ENCODE measurements at regions of chr9 and their contacts with region 1.

Region 1: DNA sequence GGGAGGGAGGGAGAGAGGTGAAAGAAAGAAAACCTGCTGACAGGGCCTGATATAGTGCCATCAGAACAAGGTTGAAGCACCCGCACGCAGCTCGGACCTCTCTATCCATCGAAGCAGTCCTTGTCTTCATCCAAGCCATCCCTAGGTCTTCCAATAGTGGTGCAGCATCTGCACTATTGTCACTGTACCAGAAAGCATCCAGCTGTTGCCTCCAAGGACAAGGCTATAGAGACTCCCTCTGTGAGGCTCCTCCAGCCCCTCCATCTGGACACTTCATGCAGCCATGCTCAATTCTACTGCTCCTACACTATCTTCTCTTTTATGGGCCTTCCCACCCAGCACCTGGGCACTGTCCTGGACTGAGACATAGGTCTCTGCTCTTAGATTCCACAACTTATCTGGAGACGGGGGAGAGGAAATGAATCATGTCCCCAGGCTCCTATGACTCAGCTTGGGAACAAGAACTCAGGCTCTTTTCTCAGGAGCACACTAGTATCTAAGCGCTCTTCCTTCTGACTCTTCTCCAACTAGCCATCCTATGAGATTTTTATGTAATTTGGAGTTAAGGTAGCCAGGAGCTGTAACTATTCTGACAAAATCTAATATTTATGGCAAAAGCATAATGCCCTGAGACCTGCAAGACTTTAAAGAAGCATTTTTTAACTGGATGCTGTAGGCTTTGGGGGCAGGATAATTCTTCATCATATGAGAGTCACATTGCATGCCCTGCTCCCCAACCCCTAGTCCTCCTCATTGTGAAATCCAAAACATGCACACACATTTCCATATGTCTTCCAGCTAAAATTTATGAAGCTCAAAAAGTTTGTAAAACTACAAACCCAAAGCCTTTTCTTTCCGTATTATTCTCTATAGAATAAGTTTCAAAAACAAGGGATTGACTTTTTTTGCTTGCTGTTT is 446.8 kb downstream of the CCDC171 start:
- DNase-seq: no peak
- H3K4me3 ChIP-seq: no peak overlapping the region
- CTCF ChIP-seq: no peak
- POLR2A ChIP-seq: no peak

Region 2: DNA sequence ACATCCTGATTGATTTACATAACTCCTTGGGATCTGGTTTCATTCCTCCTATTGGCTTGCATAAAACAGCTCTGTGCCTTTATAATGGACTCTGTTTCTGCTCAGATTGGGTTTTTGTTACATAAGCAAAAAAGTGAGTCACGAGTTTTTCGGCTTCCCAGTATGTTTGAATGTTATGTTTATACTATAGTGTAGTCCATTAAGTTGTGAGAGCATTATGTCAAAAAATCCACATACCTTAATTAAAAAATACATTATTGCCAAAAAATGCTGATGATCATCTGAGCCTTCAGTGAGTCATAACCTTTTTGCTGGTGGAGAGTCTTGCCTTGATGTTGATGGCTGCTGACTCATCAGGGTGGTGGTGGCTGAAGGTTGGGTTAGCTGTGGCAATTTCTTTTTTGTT is 302.2 kb before region 1 on chr9:
- intact Hi-C with region 1: no loop called
- DNase-seq: no peak
- H3K4me3 ChIP-seq: no peak overlapping the region
- CTCF ChIP-seq: no peak
- POLR2A ChIP-seq: no peak

Region 3: GRCh38 chr9:17185481-17186029 is 1185.9 kb after region 1 on chr9:
- intact Hi-C with region 1: loop called (anchors 5 kb)
- DNase-seq: no peak
- H3K4me3 ChIP-seq: no peak overlapping the region
- CTCF ChIP-seq: no peak
- POLR2A ChIP-seq: no peak